PC-3 (cell line): ENCODE measurements at regions of chr16 and their contacts with region 1.

Region 1: DNA sequence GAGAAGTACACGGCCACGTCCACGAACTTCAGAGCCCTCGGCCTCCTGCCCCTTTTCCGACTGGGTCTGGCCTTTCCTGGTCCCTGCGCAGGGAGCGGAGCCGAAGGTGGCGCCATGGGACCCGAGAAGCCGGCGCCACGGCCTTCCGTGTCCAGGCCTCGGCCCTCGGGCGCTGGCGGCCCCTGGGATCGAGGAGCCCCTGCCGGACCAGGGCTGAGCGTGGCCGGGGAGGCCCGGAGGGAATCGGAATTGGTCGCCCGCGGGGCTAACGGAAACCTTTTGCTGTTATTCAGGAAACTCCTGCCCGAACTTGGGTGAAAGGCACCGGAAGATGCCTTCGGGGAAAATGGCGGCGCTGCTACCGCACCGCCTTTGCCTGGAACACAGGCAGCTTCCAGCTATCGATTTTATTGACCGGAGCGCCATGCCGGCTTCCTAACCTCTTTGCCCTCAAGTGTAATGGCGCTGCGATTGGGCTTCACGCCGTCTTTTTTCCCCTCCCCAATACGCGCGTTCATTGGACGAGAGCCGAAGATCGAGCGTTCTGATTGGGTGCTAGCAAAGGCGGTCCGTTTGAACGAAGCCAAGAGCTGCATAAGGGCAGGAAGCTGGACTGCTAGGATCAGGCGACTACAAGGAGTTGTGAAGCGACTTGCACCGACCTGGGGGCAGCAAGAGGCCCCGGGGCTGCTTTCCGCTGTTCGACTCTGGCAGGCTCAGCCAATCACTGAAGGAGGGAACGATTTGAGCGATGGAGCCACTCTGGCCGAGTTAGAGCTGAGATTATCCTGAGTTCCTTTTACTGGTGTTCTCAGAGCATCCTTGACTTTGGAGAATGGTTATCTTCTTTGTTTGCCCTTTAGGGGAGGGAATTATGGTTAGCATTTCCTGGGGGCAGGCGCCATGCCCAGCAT is at the start of gene ZNF689:
- DNase-seq: peak; percentile 95
- ATAC-seq: peak; percentile 80
- H3K4me3 ChIP-seq: peak within 1 kb of the TSS; percentile 93
- H3K27ac ChIP-seq: peak within 1 kb of the TSS; percentile 68
- H3K4me1 ChIP-seq: peaks cover 3% of the 10 kb centered on the region; the same call in 1 of the 2 replicates
- H3K27me3 ChIP-seq: no peaks in the 10 kb centered on the region
- CTCF ChIP-seq: 0 out of 2 replicates have a peak, but pooled peaks have one; percentile 9
- total RNA-seq, gene ZNF689: 6.0 and 6.9 TPM in 2 replicates

Region 2: GRCh38 chr16:30180741-30181140 is 429.4 kb before region 1 on chr16:
- CTCF ChIA-PET with region 1: no interaction called
- POLR2A ChIA-PET with region 1: interaction called, 11 read pairs
- intact Hi-C with region 1: no loop called
- DNase-seq: no peak
- ATAC-seq: no peak
- H3K4me3 ChIP-seq: no peak overlapping the region
- H3K27ac ChIP-seq: no peak overlapping the region
- H3K4me1 ChIP-seq: no peaks in the 10 kb centered on the region
- H3K27me3 ChIP-seq: no peaks in the 10 kb centered on the region
- CTCF ChIP-seq: no peak

Region 3: GRCh38 chr16:30628627-30629540 is 18.7 kb after region 1 on chr16:
- CTCF ChIA-PET with region 1: no interaction called
- POLR2A ChIA-PET with region 1: no interaction called
- intact Hi-C with region 1: loop called (anchors 2 kb)
- DNase-seq: peak; percentile 84
- ATAC-seq: peak; percentile 88
- H3K4me3 ChIP-seq: no peak overlapping the region
- H3K27ac ChIP-seq: no peak overlapping the region
- H3K4me1 ChIP-seq: peaks cover 3% of the 10 kb centered on the region; the same call in 1 of the 2 replicates
- H3K27me3 ChIP-seq: no peaks in the 10 kb centered on the region
- CTCF ChIP-seq: peak; percentile 88